Activated B cell treated with CpG ODN at 0.5 μM for 24 hours (primary cell): ENCODE measurements at regions of chr9 and their contacts with region 1.

Region 1: GRCh38 chr9:85610074-85610860 is 131.5 kb downstream of the AGTPBP1 start:
- DNase-seq: no peak
- ATAC-seq: peak; percentile 88
- H3K4me3 Mint-ChIP-seq: peak overlapping the region; percentile 71
- H3K27ac Mint-ChIP-seq: peak overlapping the region; percentile 72
- H3K4me1 Mint-ChIP-seq: peaks cover 14% of the 10 kb centered on the region
- H3K27me3 Mint-ChIP-seq: no peaks in the 10 kb centered on the region
- CTCF ChIP-seq: peak; percentile 56

Region 2: GRCh38 chr9:84397151-84397728 is 1213.0 kb before region 1 on chr9:
- CTCF ChIA-PET with region 1: interaction called, 60 read pairs
- POLR2A ChIA-PET with region 1: no interaction called
- intact Hi-C with region 1: loop called (anchors 1 kb)
- DNase-seq: peak; percentile 30
- ATAC-seq: peak; percentile 65
- H3K4me3 Mint-ChIP-seq: no peak overlapping the region
- H3K27ac Mint-ChIP-seq: no peak overlapping the region
- H3K4me1 Mint-ChIP-seq: no peaks in the 10 kb centered on the region
- H3K27me3 Mint-ChIP-seq: no peaks in the 10 kb centered on the region
- CTCF ChIP-seq: no peak

Region 3: GRCh38 chr9:84668196-84669012 is 941.9 kb before region 1 on chr9:
- CTCF ChIA-PET with region 1: no interaction called
- POLR2A ChIA-PET with region 1: no interaction called
- intact Hi-C with region 1: loop called (anchors 10 kb)
- DNase-seq: no peak
- ATAC-seq: peak; percentile 49
- H3K4me3 Mint-ChIP-seq: peak overlapping the region; percentile 48
- H3K27ac Mint-ChIP-seq: no peak overlapping the region
- H3K4me1 Mint-ChIP-seq: peaks cover 24% of the 10 kb centered on the region
- H3K27me3 Mint-ChIP-seq: peaks cover 51% of the 10 kb centered on the region
- CTCF ChIP-seq: no peak

Region 4: GRCh38 chr9:85647571-85647970 is 37.3 kb after region 1 on chr9:
- CTCF ChIA-PET with region 1: no interaction called
- POLR2A ChIA-PET with region 1: no interaction called
- intact Hi-C with region 1: no loop called
- DNase-seq: no peak
- ATAC-seq: peak; percentile 93
- H3K4me3 Mint-ChIP-seq: peak overlapping the region; percentile 47
- H3K27ac Mint-ChIP-seq: peak overlapping the region; percentile 54
- H3K4me1 Mint-ChIP-seq: peaks cover 29% of the 10 kb centered on the region
- H3K27me3 Mint-ChIP-seq: no peaks in the 10 kb centered on the region
- CTCF ChIP-seq: no peak